ENCODE measurements at regions of chr14 and their contacts with region 1.

Region 1: GRCh38 chr14:71753126-71753830 is 179.0 kb upstream of the RGS6 start:
- DNase-seq: peak; percentile 92

Region 2: GRCh38 chr14:71320107-71320733 is 433.1 kb before region 1 on chr14:
- intact Hi-C with region 1: loop called (anchors 2 kb)
- DNase-seq: peak; percentile 99

Region 3: DNA sequence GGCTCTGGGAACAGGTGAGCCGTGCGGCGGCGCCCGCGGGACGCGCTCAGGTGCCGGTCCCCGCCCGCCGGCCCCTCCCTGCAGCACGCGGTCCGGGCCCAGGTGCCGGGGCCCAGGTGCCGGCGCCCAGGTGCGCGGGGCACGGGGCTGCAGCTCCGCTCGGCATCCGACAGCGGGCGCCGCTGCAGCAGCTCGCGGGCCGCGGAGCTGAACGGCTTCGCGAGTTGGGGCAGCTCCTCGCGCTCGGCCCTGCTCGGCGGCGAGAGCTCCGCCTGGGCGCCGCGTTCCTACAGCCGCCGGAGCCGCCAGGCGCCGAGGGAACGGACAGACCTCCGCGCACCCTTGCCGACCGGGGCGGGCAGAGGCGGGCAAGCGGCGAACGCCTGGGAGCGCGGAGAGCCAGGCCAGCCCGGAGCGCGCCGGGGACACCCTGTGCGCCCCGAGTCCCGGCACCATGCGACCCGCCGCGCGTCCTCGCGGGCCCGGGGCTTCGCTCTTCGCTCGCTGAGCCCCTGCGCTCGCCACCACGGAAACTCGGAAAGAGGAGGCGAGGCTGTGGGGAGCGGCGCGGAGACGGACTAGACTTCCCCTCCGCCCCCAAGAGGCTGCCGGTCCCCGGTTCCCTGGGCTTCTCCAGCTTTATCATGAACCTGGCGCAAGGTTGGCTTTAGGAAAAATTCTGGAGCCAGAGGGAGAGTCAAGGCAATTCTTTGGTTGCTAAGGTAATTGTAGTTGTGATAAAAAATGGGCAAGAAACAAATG is 179.1 kb after region 1 on chr14 and contains the start of gene RGS6:
- intact Hi-C with region 1: no loop called
- DNase-seq: no peak
- total RNA-seq, gene RGS6: 22.4 TPM